Activated CD8-positive, alpha-beta T cell treated with anti-CD3 and anti-CD28 coated beads for 36 hours (primary cell): ENCODE measurements at regions of chr14 and their contacts with region 1.

Region 1: GRCh38 chr14:62126879-62127478 is 364.8 kb downstream of the SNAPC1 start:
- DNase-seq: no peak
- ATAC-seq: peak; percentile 75
- H3K4me3 Mint-ChIP-seq: no peak overlapping the region
- H3K27ac Mint-ChIP-seq: no peak overlapping the region
- H3K4me1 Mint-ChIP-seq: no peaks in the 10 kb centered on the region
- H3K27me3 Mint-ChIP-seq: peaks cover 30% of the 10 kb centered on the region
- CTCF ChIP-seq: peak; percentile 87

Region 2: GRCh38 chr14:61269321-61270083 is 857.5 kb before region 1 on chr14:
- CTCF ChIA-PET with region 1: interaction called, 4 read pairs
- POLR2A ChIA-PET with region 1: no interaction called
- intact Hi-C with region 1: loop called (anchors 10 kb)
- DNase-seq: peak; percentile 94
- ATAC-seq: peak; percentile 99
- H3K4me3 Mint-ChIP-seq: peak overlapping the region; percentile 68
- H3K27ac Mint-ChIP-seq: no peak overlapping the region
- H3K4me1 Mint-ChIP-seq: no peaks in the 10 kb centered on the region
- H3K27me3 Mint-ChIP-seq: peaks cover 28% of the 10 kb centered on the region
- CTCF ChIP-seq: peak; percentile 81

Region 3: GRCh38 chr14:61461808-61462275 is 665.1 kb before region 1 on chr14:
- CTCF ChIA-PET with region 1: no interaction called
- POLR2A ChIA-PET with region 1: no interaction called
- intact Hi-C with region 1: loop called (anchors 10 kb)
- DNase-seq: peak; percentile 42
- ATAC-seq: peak; percentile 22
- H3K4me3 Mint-ChIP-seq: no peak overlapping the region
- H3K27ac Mint-ChIP-seq: peak overlapping the region; percentile 97
- H3K4me1 Mint-ChIP-seq: peaks cover 63% of the 10 kb centered on the region
- H3K27me3 Mint-ChIP-seq: no peaks in the 10 kb centered on the region
- CTCF ChIP-seq: peak; percentile 96

Region 4: DNA sequence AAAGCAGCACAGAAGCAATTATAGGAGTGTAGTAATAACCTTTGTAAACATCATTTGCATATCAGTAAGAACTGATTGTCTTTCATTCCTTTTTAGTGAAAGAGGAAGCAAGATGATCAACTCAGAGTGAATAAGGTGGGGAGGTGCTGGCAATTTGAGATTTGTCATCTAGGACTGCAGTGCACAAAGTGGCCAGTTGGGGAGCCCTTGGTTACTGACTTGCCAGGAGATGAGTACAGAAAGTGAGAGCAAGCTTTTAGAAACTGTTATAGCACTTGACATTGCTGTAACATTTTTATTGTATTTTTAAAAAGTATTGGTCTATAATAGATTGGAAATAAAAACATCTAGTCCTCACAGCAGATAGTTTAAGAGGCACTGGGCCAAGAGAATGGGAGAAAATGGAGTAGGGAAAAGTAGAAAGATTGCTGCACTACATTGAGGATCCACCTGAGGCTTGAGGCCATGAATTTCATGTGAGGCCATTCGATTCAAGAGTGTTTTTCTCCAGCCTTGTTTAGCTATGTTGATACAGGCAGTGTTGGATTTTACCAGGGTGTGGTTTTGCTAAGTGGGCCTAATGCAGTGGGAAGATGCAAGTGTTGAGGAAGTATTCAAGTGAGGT is 266.6 kb before region 1 on chr14:
- CTCF ChIA-PET with region 1: interaction called, 24 read pairs
- POLR2A ChIA-PET with region 1: no interaction called
- intact Hi-C with region 1: no loop called
- DNase-seq: peak; percentile 89
- ATAC-seq: peak; percentile 100
- H3K4me3 Mint-ChIP-seq: no peak overlapping the region
- H3K27ac Mint-ChIP-seq: no peak overlapping the region
- H3K4me1 Mint-ChIP-seq: no peaks in the 10 kb centered on the region
- H3K27me3 Mint-ChIP-seq: peaks cover 16% of the 10 kb centered on the region
- CTCF ChIP-seq: peak; percentile 93

Region 5: DNA sequence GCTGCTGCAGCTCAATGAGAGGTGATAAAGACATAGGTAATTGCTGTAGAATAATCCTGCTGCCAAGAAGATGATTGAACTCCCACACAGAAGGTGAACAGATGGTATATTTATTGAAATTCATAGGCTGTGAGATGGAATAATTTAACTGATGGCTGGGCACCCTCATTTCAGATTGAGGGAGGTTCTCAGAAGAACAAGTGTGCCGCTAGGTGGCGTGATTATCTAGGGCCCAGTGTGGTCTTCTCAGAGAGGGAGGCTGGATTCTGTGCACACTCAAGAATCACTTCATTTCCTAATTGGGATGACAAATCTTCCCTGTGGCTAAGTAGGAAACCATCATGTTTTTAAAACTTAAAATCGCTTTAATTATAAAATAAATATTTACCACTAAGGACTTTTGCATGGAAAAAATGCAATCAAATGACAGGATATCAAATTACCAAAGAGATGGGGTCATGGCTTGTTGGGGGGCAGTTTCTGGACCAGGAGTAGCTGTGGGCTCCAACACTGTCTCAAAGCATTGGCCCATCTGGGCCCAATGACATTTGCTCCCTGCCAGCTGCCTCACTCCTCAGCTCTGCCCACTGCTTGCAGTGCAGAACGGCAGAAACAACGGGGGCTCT is 232.4 kb before region 1 on chr14:
- CTCF ChIA-PET with region 1: interaction called, 61 read pairs
- POLR2A ChIA-PET with region 1: no interaction called
- intact Hi-C with region 1: loop called (anchors 2 kb)
- DNase-seq: peak; percentile 82
- ATAC-seq: no peak
- H3K4me3 Mint-ChIP-seq: no peak overlapping the region
- H3K27ac Mint-ChIP-seq: no peak overlapping the region
- H3K4me1 Mint-ChIP-seq: peaks cover 7% of the 10 kb centered on the region
- H3K27me3 Mint-ChIP-seq: peaks cover 3% of the 10 kb centered on the region
- CTCF ChIP-seq: peak; percentile 73

Region 6: DNA sequence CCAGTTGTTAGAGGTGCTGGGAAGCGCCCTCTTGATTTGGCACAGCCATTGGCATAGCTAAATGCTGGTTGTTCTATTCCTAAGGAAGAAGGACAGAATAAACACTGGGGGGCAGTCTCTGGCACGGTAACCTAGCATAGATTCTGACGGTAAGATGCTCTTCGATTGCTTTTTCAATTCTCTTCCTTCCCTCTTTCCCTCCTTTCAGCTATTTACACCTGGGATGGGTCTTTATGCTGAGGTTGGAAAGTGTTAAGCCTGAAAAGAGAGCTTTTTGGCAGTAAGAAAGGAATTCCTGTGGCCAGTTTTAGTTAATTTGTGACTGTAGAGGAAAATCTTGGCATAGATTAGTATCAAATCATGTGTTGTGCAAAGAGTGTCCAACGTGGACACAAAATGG is 201.9 kb before region 1 on chr14:
- CTCF ChIA-PET with region 1: interaction called, 77 read pairs
- POLR2A ChIA-PET with region 1: no interaction called
- intact Hi-C with region 1: loop called (anchors 2 kb)
- DNase-seq: peak; percentile 34
- ATAC-seq: no peak
- H3K4me3 Mint-ChIP-seq: no peak overlapping the region
- H3K27ac Mint-ChIP-seq: no peak overlapping the region
- H3K4me1 Mint-ChIP-seq: no peaks in the 10 kb centered on the region
- H3K27me3 Mint-ChIP-seq: peaks cover 18% of the 10 kb centered on the region
- CTCF ChIP-seq: peak; percentile 24

Region 7: DNA sequence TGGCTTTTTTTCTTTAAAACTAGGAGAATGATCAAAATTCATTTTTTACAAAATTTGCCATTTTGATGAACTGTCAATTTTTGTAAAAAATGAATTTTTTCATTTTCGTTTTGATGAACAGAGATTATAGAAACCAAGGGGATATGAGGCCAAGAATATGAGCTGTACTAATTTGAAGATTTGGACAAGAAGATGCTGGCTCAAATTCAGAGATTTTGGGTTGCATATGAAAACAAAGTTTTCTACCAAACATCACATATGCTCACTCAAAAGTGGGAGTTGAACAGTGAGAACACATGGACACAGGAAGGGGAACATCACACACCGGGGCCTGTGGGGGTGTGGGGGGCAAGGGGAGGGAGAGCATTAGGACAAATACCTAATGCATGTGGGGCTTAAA is 134.1 kb before region 1 on chr14:
- CTCF ChIA-PET with region 1: interaction called, 16 read pairs
- POLR2A ChIA-PET with region 1: no interaction called
- intact Hi-C with region 1: no loop called
- DNase-seq: no peak
- ATAC-seq: no peak
- H3K4me3 Mint-ChIP-seq: no peak overlapping the region
- H3K27ac Mint-ChIP-seq: no peak overlapping the region
- H3K4me1 Mint-ChIP-seq: no peaks in the 10 kb centered on the region
- H3K27me3 Mint-ChIP-seq: peaks cover 4% of the 10 kb centered on the region
- CTCF ChIP-seq: no peak

Region 8: DNA sequence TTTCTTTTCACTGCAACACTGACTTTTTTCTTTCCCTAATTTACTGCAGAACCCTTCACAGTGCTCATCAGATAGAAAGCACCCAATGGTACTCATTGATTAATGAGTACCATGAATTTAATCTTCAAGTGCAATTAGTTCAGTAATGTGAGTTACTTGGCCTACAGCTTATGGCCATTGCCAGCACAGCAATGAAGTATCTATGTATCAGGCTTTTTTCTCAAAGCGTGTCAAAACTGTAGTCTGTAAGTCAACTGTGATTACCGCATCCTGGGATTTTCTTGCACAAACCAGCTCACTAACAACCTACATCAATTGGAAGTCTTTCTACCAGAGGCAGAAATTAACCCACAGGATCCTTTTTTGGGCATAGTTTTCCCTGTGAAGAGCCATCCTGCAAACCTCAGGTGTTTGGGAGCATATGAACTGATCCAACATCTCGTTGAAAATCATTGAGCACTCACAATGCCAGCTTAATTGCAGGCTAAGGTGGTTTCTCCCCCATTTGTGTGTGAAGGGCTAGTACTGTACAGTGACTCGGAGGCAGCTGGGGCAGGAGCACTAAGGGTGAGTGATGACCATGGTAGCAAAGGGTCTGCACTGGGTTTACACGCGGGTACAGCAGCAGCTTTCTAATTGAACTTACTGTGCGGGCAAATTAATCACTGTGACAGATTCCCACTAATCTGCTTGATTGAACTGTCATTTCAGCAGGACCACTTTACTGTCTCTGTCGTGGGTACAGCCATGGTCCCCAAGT is 254.5 kb after region 1 on chr14:
- CTCF ChIA-PET with region 1: no interaction called
- POLR2A ChIA-PET with region 1: no interaction called
- intact Hi-C with region 1: no loop called
- DNase-seq: no peak
- ATAC-seq: no peak
- H3K4me3 Mint-ChIP-seq: no peak overlapping the region
- H3K27ac Mint-ChIP-seq: no peak overlapping the region
- H3K4me1 Mint-ChIP-seq: no peaks in the 10 kb centered on the region
- H3K27me3 Mint-ChIP-seq: no peaks in the 10 kb centered on the region
- CTCF ChIP-seq: no peak